HEK293 (cell line): ENCODE measurements at regions of chr1 and their contacts with region 1.

Region 1: DNA sequence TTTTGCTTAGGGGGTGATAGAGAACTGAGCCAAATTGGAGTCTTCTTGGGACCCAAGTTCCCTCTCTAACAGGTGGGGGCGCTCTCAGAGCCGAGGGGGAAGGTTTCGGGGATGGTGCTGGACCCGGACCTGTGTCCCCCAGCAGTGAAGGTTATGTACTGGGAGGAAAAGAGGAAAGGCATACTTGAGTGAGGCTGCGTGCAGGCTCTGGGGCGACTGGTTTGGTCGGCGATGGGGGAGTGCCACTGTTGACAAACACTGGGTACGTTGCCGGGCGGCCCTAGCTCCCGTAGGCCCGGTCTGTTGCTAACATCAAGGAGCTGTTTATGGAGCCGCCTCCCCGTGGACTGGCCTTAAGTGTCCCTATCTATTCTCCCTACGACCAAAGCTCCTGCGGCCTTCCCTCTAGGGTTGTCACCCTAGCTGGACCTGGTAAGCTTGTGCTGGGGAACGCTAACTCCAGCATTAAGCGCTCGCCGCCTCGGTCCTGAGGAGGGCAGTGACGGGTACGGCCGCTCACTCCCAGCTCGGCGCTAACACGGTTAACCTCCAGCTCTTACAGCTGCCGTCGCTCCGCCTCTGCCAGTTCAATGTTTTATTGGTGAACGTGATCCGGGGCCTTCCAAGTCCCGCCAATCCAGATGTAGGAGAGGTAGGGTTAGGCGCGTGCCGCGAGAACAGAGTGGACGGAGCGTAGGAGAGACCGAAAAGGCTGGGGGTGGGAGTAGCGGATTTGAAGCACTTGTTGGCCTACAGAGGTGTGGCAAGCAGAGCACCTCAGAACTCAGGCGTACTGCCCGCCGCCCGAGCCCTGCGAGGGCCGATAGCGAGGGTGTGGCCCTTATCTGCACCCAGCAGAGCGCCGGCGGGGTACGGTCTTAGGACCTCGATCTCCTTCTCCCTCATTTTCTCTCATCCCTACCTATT is at the start of gene PPOX:
- H3K4me3 ChIP-seq: peak within 1 kb of the TSS; percentile 58
- H3K27ac ChIP-seq: peak within 1 kb of the TSS; percentile 39; the same call in 1 of the 2 replicates
- H3K4me1 ChIP-seq: peaks cover 3% of the 10 kb centered on the region; the same call in 1 of the 2 replicates
- CTCF ChIP-seq: peak; percentile 70

Region 2: GRCh38 chr1:160108888-160109662 is 1056.9 kb before region 1 on chr1:
- CTCF ChIA-PET with region 1: no interaction called
- POLR2A ChIA-PET with region 1: no interaction called
- H3K4me3 ChIP-seq: no peak overlapping the region
- H3K27ac ChIP-seq: no peak overlapping the region
- H3K4me1 ChIP-seq: no peaks in the 10 kb centered on the region
- CTCF ChIP-seq: no peak

Region 3: DNA sequence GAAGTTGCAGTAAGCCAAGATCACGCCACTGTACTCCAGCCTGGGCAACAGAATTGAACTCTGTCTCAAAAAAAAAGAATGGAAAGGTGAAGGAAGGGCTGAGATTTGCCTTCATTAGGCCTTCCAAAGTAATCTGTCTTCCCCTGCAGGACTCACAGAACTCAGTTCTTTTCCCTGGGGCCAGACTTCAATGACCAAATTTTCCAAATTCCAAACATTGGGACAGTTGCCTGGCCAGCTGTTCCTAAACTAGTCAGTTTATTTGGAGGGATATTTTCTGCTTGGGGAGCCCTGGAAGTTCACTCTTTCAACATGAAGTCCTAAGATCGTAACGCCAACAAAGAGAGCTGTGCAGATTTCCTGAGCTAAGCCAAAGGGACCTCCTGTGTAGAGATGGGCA is 28.1 kb before region 1 on chr1:
- CTCF ChIA-PET with region 1: interaction called, 12 read pairs
- POLR2A ChIA-PET with region 1: interaction called, 24 read pairs
- H3K4me3 ChIP-seq: no peak overlapping the region
- H3K27ac ChIP-seq: no peak overlapping the region
- H3K4me1 ChIP-seq: no peaks in the 10 kb centered on the region
- CTCF ChIP-seq: no peak

Region 4: GRCh38 chr1:161177112-161177935 is 11.3 kb after region 1 on chr1 and contains the start of gene B4GALT3:
- CTCF ChIA-PET with region 1: interaction called, 23 read pairs
- POLR2A ChIA-PET with region 1: interaction called, 39 read pairs
- H3K4me3 ChIP-seq: peak within 1 kb of the TSS; percentile 88
- H3K27ac ChIP-seq: no peak within 1 kb of the TSS; the same call in 1 of the 2 replicates
- H3K4me1 ChIP-seq: no peaks in the 10 kb centered on the region
- CTCF ChIP-seq: peak; percentile 55; the same call in 1 of the 2 replicates

Region 5: GRCh38 chr1:161201828-161202725 is 36.1 kb after region 1 on chr1 and contains the start of gene NDUFS2:
- CTCF ChIA-PET with region 1: interaction called, 8 read pairs
- POLR2A ChIA-PET with region 1: interaction called, 16 read pairs
- H3K4me3 ChIP-seq: peak within 1 kb of the TSS; percentile 56
- H3K27ac ChIP-seq: peak within 1 kb of the TSS; percentile 72
- H3K4me1 ChIP-seq: peaks cover 9% of the 10 kb centered on the region; the same call in 1 of the 2 replicates
- CTCF ChIP-seq: peak; percentile 79